ENCODE measurements at regions of chr1 and their contacts with region 1.

Region 1: GRCh38 chr1:4652631-4653327 is 1.6 kb upstream of the AJAP1 start:
- DNase-seq: peak; percentile 22 to 76 (median 57)
- ATAC-seq: peak; percentile 69
- H3K4me3 ChIP-seq: no peak overlapping the region
- H3K4me3 Mint-ChIP-seq: peak overlapping the region; percentile 11
- H3K27ac ChIP-seq: no peak overlapping the region
- H3K27ac Mint-ChIP-seq: no peak overlapping the region
- H3K4me1 ChIP-seq: peaks cover 11% of the 10 kb centered on the region
- H3K4me1 Mint-ChIP-seq: peaks cover 7% of the 10 kb centered on the region
- H3K27me3 ChIP-seq: peaks cover 10 to 21% of the 10 kb centered on the region in 2 experiments
- H3K27me3 Mint-ChIP-seq: peaks cover 18% of the 10 kb centered on the region
- CTCF ChIP-seq: peak; percentile 88

Region 2: DNA sequence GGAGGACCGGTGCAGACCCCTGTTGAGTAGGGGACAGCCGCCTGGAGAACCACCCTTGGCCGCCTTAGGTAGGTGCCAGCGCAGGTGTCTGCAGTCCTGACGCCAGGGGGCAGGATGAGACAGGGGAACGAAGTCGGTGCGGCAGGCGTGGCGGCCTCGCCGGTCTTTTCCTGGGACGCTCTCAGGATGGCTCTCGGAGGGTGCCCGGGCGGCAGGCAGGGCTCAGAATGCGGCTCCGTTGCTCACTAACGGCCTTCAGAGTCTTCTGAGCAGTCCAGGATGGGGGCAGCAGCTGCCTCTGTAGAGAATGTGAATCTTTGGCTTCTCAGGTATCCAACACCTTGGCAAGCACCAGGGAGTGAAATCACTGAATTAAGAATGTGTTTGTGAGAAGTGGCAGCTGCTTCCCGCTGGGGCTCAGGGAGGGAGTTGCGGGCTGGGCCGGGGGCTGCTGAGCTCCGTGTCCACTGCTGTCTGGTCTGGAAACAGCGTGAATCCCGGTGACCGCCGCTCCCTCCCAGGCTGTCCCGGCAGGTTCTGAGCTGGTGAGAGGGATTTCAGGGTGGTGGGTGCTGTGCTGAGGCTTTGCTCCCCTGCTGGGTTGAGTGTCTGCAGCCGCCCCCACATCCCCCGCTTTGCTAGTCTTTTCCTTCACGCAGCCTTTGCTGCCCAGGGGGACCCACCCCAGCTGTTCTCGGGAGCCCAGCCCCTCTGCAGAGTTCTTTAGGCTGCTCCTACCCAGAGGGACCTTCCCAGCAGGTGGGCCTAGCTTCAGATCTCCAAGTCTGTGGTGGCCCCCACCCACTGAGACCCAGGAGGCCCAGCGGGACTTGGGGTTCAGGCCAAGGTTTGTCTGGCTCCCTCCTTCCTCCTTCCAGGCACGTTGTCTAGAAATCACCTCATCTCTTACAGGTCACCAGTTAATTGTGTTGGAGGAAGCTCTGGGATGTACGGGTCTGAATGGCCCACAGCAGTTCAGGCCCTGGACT is 741.6 kb before region 1 on chr1:
- CTCF ChIA-PET with region 1: no interaction called
- POLR2A ChIA-PET with region 1: no interaction called
- intact Hi-C with region 1: loop called in 1 of 2 experiments (anchors 10 kb)
- DNase-seq: peak; percentile 51 to 85 (median 79)
- ATAC-seq: peak; percentile 94
- H3K4me3 ChIP-seq: no peak overlapping the region
- H3K4me3 Mint-ChIP-seq: no peak overlapping the region
- H3K27ac ChIP-seq: no peak overlapping the region
- H3K27ac Mint-ChIP-seq: no peak overlapping the region
- H3K4me1 ChIP-seq: peaks cover 6% of the 10 kb centered on the region
- H3K4me1 Mint-ChIP-seq: peaks cover 2% of the 10 kb centered on the region
- H3K27me3 ChIP-seq: peaks cover 0 to 2% of the 10 kb centered on the region in 2 experiments
- H3K27me3 Mint-ChIP-seq: no peaks in the 10 kb centered on the region
- CTCF ChIP-seq: peak; percentile 75

Region 3: GRCh38 chr1:4825800-4826450 is 173.1 kb after region 1 on chr1:
- CTCF ChIA-PET with region 1: interaction called, 8 read pairs
- POLR2A ChIA-PET with region 1: no interaction called
- intact Hi-C with region 1: loop called in 1 of 2 experiments (anchors 1 kb)
- DNase-seq: peak in 2 of 9 experiments; percentile 13 to 23
- ATAC-seq: no peak
- H3K4me3 ChIP-seq: no peak overlapping the region
- H3K4me3 Mint-ChIP-seq: no peak overlapping the region
- H3K27ac ChIP-seq: no peak overlapping the region
- H3K27ac Mint-ChIP-seq: no peak overlapping the region
- H3K4me1 ChIP-seq: no peaks in the 10 kb centered on the region
- H3K4me1 Mint-ChIP-seq: peaks cover 3% of the 10 kb centered on the region
- H3K27me3 ChIP-seq: no peaks in the 10 kb centered on the region
- H3K27me3 Mint-ChIP-seq: peaks cover 5% of the 10 kb centered on the region
- CTCF ChIP-seq: peak; percentile 34

Region 4: GRCh38 chr1:5597991-5598823 is 945.4 kb after region 1 on chr1:
- CTCF ChIA-PET with region 1: no interaction called
- POLR2A ChIA-PET with region 1: no interaction called
- intact Hi-C with region 1: loop called in 1 of 2 experiments (anchors 10 kb)
- DNase-seq: no peak
- ATAC-seq: no peak
- H3K4me3 ChIP-seq: no peak overlapping the region
- H3K4me3 Mint-ChIP-seq: no peak overlapping the region
- H3K27ac ChIP-seq: no peak overlapping the region
- H3K27ac Mint-ChIP-seq: no peak overlapping the region
- H3K4me1 ChIP-seq: no peaks in the 10 kb centered on the region
- H3K4me1 Mint-ChIP-seq: no peaks in the 10 kb centered on the region
- H3K27me3 ChIP-seq: no peaks in the 10 kb centered on the region
- H3K27me3 Mint-ChIP-seq: peaks cover 11% of the 10 kb centered on the region
- CTCF ChIP-seq: no peak

Region 5: GRCh38 chr1:5745776-5746610 is 1093.2 kb after region 1 on chr1:
- CTCF ChIA-PET with region 1: interaction called, 3 read pairs
- POLR2A ChIA-PET with region 1: no interaction called
- intact Hi-C with region 1: loop called (anchors 2 to 5 kb)
- DNase-seq: peak; percentile 27 to 76 (median 60)
- ATAC-seq: peak; percentile 42
- H3K4me3 ChIP-seq: no peak overlapping the region
- H3K4me3 Mint-ChIP-seq: no peak overlapping the region
- H3K27ac ChIP-seq: no peak overlapping the region
- H3K27ac Mint-ChIP-seq: no peak overlapping the region
- H3K4me1 ChIP-seq: no peaks in the 10 kb centered on the region
- H3K4me1 Mint-ChIP-seq: peaks cover 2% of the 10 kb centered on the region
- H3K27me3 ChIP-seq: peaks cover 3 to 5% of the 10 kb centered on the region in 2 experiments
- H3K27me3 Mint-ChIP-seq: peaks cover 16% of the 10 kb centered on the region
- CTCF ChIP-seq: peak; percentile 74

Region 6: GRCh38 chr1:5915587-5916571 is 1263.1 kb after region 1 on chr1:
- CTCF ChIA-PET with region 1: no interaction called
- POLR2A ChIA-PET with region 1: no interaction called
- intact Hi-C with region 1: loop called in 1 of 2 experiments (anchors 5 kb)
- DNase-seq: peak in 3 of 9 experiments; percentile 16 to 63 (median 44)
- ATAC-seq: peak; percentile 26
- H3K4me3 ChIP-seq: no peak overlapping the region
- H3K4me3 Mint-ChIP-seq: no peak overlapping the region
- H3K27ac ChIP-seq: no peak overlapping the region
- H3K27ac Mint-ChIP-seq: no peak overlapping the region
- H3K4me1 ChIP-seq: no peaks in the 10 kb centered on the region
- H3K4me1 Mint-ChIP-seq: peaks cover 4% of the 10 kb centered on the region
- H3K27me3 ChIP-seq: no peaks in the 10 kb centered on the region
- H3K27me3 Mint-ChIP-seq: no peaks in the 10 kb centered on the region
- CTCF ChIP-seq: peak; percentile 68

Measured in CD8-positive, alpha-beta T cell (primary cell).